ENCODE measurements at regions of chr16 and their contacts with region 1.

Region 1: DNA sequence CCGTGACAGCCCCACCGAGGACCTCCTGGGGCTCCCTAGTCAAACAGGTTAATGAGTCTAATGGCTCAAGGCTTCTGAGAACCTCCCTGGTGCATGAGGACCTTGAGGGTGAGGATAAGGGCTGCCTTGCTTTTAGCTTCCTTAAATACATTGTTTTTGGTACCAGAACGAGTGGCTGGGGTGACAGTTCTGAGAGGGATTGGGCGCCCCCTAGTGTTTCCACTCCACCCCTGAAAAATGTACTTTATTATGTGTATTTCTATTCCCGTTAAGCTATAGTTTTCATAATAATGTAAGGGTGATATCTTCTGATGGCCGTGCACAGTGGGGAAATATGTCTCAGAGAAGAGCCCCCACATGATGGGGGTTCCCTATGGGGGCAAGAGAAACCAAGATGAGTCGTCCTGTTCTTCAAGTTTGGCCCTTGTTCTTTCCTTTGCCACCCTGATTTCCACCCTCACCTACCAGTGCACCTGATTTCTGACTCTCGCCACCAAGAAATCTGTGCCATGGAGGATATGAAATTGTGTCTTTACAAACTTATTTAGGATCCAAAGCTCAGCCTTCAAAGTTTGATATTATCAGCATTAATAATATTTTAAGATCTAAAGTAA is 14.5 kb upstream of the VWA3A start:
- DNase-seq: no peak
- ATAC-seq: peak; percentile 92
- H3K4me3 ChIP-seq: no peak overlapping the region
- H3K27ac ChIP-seq: no peak overlapping the region
- H3K4me1 ChIP-seq: no peaks in the 10 kb centered on the region
- H3K27me3 ChIP-seq: no peaks in the 10 kb centered on the region
- CTCF ChIP-seq: peak; percentile 72 to 85 (median 74)
- EP300 ChIP-seq: no peak; a peak in 1 of 4 replicates
- POLR2A ChIP-seq: no peak
- RAD21 ChIP-seq: peak; percentile 89

Region 2: GRCh38 chr16:21952793-21953540 is 124.8 kb before region 1 on chr16 and contains the start of gene UQCRC2:
- CTCF ChIA-PET with region 1: interaction called, 18 read pairs
- POLR2A ChIA-PET with region 1: interaction called, 3 read pairs
- RAD21 ChIA-PET with region 1: interaction called, 19 read pairs
- SMC1A ChIA-PET with region 1: interaction called, 26 read pairs
- in situ Hi-C with region 1: no loop called
- intact Hi-C with region 1: no loop called
- DNase-seq: peak; percentile 90
- ATAC-seq: peak; percentile 91
- H3K4me3 ChIP-seq: peak within 1 kb of the TSS; percentile 96
- H3K27ac ChIP-seq: peak within 1 kb of the TSS; percentile 99
- H3K4me1 ChIP-seq: peaks cover 24% of the 10 kb centered on the region
- H3K27me3 ChIP-seq: no peaks in the 10 kb centered on the region
- CTCF ChIP-seq: no peak
- EP300 ChIP-seq: peak; percentile 42 to 54; a peak in 2 of 4 replicates
- POLR2A ChIP-seq: peak; percentile 94
- RAD21 ChIP-seq: no peak
- polyA plus RNA-seq, gene UQCRC2: 256 to 277 TPM

Region 3: GRCh38 chr16:22001591-22001990 is 76.2 kb before region 1 on chr16:
- CTCF ChIA-PET with region 1: interaction called, 686 read pairs
- POLR2A ChIA-PET with region 1: interaction called, 8 read pairs
- RAD21 ChIA-PET with region 1: interaction called, 466 read pairs
- SMC1A ChIA-PET with region 1: interaction called, 567 read pairs
- in situ Hi-C with region 1: loop called (anchors 5 kb)
- intact Hi-C with region 1: loop called (anchors 1 kb)
- DNase-seq: no peak
- ATAC-seq: no peak
- H3K4me3 ChIP-seq: no peak overlapping the region
- H3K27ac ChIP-seq: no peak overlapping the region
- H3K4me1 ChIP-seq: no peaks in the 10 kb centered on the region
- H3K27me3 ChIP-seq: no peaks in the 10 kb centered on the region
- CTCF ChIP-seq: no peak
- EP300 ChIP-seq: no peak
- POLR2A ChIP-seq: no peak
- RAD21 ChIP-seq: no peak

Region 4: GRCh38 chr16:22035153-22035552 is 42.7 kb before region 1 on chr16:
- CTCF ChIA-PET with region 1: interaction called, 44 read pairs
- POLR2A ChIA-PET with region 1: interaction called, 3 read pairs
- RAD21 ChIA-PET with region 1: interaction called, 10 read pairs
- SMC1A ChIA-PET with region 1: interaction called, 35 read pairs
- in situ Hi-C with region 1: no loop called
- intact Hi-C with region 1: no loop called
- DNase-seq: peak; percentile 43
- ATAC-seq: peak; percentile 93
- H3K4me3 ChIP-seq: no peak overlapping the region
- H3K27ac ChIP-seq: peak overlapping the region; percentile 52
- H3K4me1 ChIP-seq: peaks cover 5% of the 10 kb centered on the region
- H3K27me3 ChIP-seq: no peaks in the 10 kb centered on the region
- CTCF ChIP-seq: no peak
- EP300 ChIP-seq: no peak
- POLR2A ChIP-seq: no peak
- RAD21 ChIP-seq: no peak

Region 5: GRCh38 chr16:22098405-22099255 is 20.8 kb after region 1 on chr16:
- CTCF ChIA-PET with region 1: interaction called, 94 read pairs
- POLR2A ChIA-PET with region 1: interaction called, 4 read pairs
- RAD21 ChIA-PET with region 1: interaction called, 35 read pairs
- SMC1A ChIA-PET with region 1: interaction called, 30 read pairs
- in situ Hi-C with region 1: no loop called
- intact Hi-C with region 1: no loop called
- DNase-seq: peak; percentile 17
- ATAC-seq: peak; percentile 97
- H3K4me3 ChIP-seq: no peak overlapping the region
- H3K27ac ChIP-seq: no peak overlapping the region
- H3K4me1 ChIP-seq: no peaks in the 10 kb centered on the region
- H3K27me3 ChIP-seq: no peaks in the 10 kb centered on the region; a peak in 1 of 4 replicates
- CTCF ChIP-seq: peak; percentile 68 to 75 (median 69)
- EP300 ChIP-seq: no peak
- POLR2A ChIP-seq: no peak
- RAD21 ChIP-seq: peak; percentile 69

Region 6: GRCh38 chr16:22190776-22191531 is 113.1 kb after region 1 on chr16:
- CTCF ChIA-PET with region 1: interaction called, 103 read pairs
- POLR2A ChIA-PET with region 1: interaction called, 6 read pairs
- RAD21 ChIA-PET with region 1: interaction called, 68 read pairs
- SMC1A ChIA-PET with region 1: interaction called, 69 read pairs
- in situ Hi-C with region 1: no loop called
- intact Hi-C with region 1: loop called (anchors 2 kb)
- DNase-seq: peak; percentile 98
- ATAC-seq: peak; percentile 67
- H3K4me3 ChIP-seq: peak overlapping the region; percentile 81
- H3K27ac ChIP-seq: peak overlapping the region; percentile 90
- H3K4me1 ChIP-seq: peaks cover 43% of the 10 kb centered on the region
- H3K27me3 ChIP-seq: no peaks in the 10 kb centered on the region
- CTCF ChIP-seq: no peak
- EP300 ChIP-seq: no peak
- POLR2A ChIP-seq: peak; percentile 85
- RAD21 ChIP-seq: no peak